ENCODE measurements at regions of chr1 and their contacts with region 1.

Region 1: DNA sequence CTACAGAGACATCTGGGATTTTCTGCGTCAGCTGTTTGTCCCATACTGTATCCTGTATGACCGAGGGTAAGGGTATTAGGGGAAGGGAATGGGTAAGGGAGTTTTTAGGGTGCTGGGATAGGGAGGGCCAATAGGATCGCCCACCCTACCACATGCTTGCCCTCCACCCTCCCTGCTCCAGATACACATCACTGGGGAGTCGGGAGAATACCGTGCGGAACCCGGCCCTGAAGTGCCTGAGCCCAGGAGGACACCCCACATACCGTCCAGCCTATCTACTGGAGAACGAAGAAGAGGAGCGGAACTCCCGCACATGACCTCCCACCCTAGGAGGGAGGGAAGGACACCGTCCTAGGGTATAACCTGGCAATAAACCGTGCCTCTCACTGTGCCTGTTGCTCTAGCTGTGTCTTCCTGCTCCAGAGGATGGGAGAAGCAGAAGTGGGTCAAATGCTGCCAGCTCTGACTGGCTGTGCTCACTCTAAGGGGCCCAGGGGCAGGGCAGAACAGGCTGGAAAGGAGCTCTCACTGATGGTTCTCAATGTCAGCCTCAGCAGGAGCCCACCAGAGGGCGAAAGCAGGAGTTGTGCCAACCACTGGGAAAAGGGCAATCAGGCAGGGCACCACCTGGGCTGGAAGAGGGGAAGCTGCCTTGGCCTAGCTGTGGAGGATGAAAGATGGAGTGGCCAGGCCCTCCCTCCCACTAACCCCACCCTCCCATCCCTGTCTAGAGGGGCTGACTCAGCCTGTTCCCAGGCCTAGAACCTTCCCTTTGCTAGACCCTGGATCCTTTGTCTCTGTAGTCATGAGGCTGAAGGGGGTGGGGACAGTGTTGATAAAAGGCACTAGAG is 440 bp upstream of the LENEP start:
- DNase-seq: no peak

Region 2: DNA sequence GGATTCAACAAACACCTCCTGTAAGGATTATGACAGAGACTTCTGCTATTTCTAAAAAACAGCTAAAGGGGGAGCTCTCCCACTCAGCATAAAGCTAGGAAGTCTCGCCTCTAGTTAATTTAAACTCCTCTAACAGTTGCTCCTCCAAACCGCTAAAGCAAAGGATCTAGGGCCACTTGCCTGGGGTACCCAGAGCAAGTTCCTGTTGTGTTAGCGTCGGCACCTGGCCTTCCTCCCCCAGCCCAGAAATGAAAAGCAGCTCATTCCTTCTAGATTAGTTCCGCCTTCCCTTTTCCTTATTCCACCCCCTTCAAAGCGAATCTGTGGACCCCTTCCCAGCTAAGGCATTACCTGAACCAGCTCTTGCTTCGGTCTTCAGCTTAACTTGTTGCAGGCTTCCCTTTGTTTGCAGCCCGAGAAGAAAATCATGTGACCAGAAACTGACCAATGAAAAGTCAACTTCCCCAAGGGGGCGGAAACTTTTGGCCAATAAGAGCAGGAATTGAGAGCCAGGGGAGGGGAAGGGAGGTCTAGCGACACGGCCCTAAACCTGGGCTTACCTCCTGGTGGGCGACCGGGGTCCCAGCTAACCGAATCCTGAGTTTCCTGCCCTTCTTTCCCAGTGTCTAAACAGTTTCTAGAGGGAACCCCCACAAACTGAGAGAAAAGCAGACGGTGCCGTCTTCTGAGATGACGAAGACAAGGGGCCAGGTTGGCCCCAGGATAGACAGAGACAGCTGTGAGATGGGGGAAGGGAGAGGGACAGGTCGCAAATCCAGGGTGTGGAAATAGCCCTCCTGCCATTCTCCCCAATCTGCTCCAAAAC is 37.0 kb before region 1 on chr1 and contains the start of gene PBXIP1:
- CTCF ChIA-PET with region 1: interaction called, 14 read pairs
- POLR2A ChIA-PET with region 1: interaction called, 10 read pairs
- DNase-seq: peak; percentile 95

Region 3: DNA sequence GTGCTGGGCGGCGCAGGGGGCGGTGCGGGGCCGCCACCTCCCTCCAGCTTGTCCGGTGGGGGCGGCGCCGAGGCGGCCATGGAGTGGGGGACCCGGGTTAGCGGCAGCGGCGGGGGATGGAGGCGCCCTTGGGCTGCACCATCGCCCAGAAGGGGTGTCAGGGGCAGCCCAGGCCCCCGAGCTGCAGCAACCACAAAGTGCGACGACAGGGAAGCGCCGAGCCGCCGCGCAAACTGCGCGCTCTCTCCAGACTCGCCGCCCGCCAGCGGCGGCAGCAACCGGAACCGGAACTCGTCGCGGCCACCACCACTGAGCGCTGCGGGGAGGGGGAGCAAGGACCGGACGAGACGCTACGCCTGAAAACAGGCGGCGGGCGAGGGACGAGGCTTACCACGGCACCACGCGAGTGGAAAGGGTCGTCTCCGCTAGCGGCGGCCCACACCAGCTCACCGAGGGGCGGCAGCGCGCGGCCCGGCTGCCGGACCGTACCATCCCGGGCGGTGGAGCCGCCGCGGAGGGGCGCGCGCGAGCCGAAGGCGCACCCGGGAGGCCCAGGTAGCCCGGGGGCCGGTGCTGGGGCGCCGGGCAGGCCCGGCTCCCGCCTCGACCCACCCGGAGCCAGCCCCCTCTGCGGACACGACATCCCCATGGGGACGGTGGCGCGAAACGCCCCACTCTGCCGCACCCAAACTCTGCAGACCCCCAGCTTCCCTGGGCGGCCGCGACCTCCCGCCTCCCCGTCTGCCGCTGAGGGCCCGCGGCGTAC is 31.3 kb before region 1 on chr1 and contains the start of gene PYGO2:
- CTCF ChIA-PET with region 1: interaction called, 14 read pairs
- POLR2A ChIA-PET with region 1: interaction called, 10 read pairs
- DNase-seq: peak; percentile 87

Region 4: GRCh38 chr1:154974063-154974807 is 18.7 kb before region 1 on chr1 and contains the start of gene CKS1B:
- CTCF ChIA-PET with region 1: interaction called, 8 read pairs
- POLR2A ChIA-PET with region 1: interaction called, 11 read pairs
- DNase-seq: peak; percentile 94